T-cell (primary cell): ENCODE measurements at regions of chr13 and their contacts with region 1.

Region 1: DNA sequence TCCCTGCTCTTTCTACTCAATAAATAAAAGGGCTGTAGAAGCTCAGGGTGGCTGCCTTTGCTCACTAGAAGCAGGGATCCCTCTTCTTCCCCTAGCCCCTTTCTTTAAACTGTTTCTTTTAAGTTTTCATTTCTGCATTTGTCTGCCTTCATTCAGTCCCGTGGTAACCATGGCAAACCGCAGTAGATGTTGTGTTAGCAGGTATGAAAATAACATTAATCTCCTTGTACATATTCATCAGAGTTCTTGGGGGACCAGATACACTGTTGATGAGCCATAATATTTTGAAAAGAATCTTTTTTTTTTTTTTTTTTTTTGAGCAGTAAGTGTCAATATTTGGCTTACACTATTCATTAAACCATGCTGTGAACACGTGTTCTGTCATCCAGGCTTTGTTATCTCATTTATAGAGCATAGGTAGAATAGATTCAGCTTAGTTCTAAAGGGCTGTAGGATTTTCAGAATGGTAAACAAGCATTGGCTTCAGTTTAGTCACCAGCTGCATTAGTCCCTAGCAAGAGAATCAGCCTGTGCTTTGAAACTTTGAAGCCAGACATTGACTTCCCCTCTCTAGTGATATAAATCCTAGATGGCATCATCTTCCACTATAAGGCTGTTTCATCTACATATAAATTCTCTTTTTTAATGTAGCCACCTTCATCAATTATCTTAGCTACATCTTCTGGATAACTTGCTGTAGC is 59.4 kb upstream of the SPRY2 start:
- DNase-seq: peak in 1 of 35 experiments; percentile 13
- ATAC-seq: peak in 1 of 4 experiments; percentile 28
- H3K4me3 ChIP-seq: no peak overlapping the region
- H3K4me3 Mint-ChIP-seq: peak overlapping the region in 1 of 3 donors; percentile 58
- H3K27ac ChIP-seq: no peak overlapping the region
- H3K27ac Mint-ChIP-seq: no peak overlapping the region
- H3K4me1 ChIP-seq: peaks cover 10 to 29% of the 10 kb centered on the region in 2 experiments
- H3K4me1 Mint-ChIP-seq: peaks cover 21 to 35% (median 23%) of the 10 kb centered on the region in 3 donors
- H3K27me3 ChIP-seq: no peaks in the 10 kb centered on the region
- H3K27me3 Mint-ChIP-seq: no peaks in the 10 kb centered on the region

Region 2: DNA sequence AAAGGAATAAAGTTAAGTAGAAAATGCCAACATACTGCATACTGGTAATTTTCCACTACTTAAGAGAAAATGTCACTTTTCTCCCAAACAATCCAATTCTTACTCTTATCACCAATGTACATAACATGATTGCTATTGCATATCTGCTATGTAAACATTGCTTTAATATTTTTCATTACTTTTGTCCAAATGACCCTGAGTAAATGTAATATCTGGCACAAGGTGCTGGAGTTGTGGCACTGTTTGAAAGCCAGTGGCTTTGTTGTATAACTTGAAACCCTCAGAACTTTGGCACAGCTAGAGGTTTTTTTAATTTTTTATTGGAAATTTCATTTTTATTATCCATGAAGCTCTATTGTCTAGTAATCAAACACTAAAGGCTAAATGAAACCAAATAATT is 13.7 kb before region 1 on chr13:
- CTCF ChIA-PET with region 1: interaction called in 1 of 2 experiments, 10 read pairs
- POLR2A ChIA-PET with region 1: no interaction called
- DNase-seq: no peak
- ATAC-seq: no peak
- H3K4me3 ChIP-seq: no peak overlapping the region
- H3K4me3 Mint-ChIP-seq: no peak overlapping the region
- H3K27ac ChIP-seq: no peak overlapping the region
- H3K27ac Mint-ChIP-seq: no peak overlapping the region
- H3K4me1 ChIP-seq: peaks cover 0 to 12% of the 10 kb centered on the region in 2 experiments
- H3K4me1 Mint-ChIP-seq: peaks cover 0 to 7% (median 5%) of the 10 kb centered on the region in 3 donors
- H3K27me3 ChIP-seq: no peaks in the 10 kb centered on the region
- H3K27me3 Mint-ChIP-seq: peaks cover 0 to 3% of the 10 kb centered on the region in 2 donors

Region 3: GRCh38 chr13:80716610-80717081 is 316.3 kb after region 1 on chr13:
- CTCF ChIA-PET with region 1: no interaction called
- POLR2A ChIA-PET with region 1: no interaction called
- DNase-seq: no peak
- ATAC-seq: no peak
- H3K4me3 ChIP-seq: no peak overlapping the region
- H3K4me3 Mint-ChIP-seq: no peak overlapping the region
- H3K27ac ChIP-seq: no peak overlapping the region
- H3K27ac Mint-ChIP-seq: no peak overlapping the region
- H3K4me1 ChIP-seq: peaks cover 0 to 2% of the 10 kb centered on the region in 2 experiments
- H3K4me1 Mint-ChIP-seq: no peaks in the 10 kb centered on the region
- H3K27me3 ChIP-seq: no peaks in the 10 kb centered on the region
- H3K27me3 Mint-ChIP-seq: no peaks in the 10 kb centered on the region